ENCODE measurements at regions of chr5 and their contacts with region 1.

Region 1: DNA sequence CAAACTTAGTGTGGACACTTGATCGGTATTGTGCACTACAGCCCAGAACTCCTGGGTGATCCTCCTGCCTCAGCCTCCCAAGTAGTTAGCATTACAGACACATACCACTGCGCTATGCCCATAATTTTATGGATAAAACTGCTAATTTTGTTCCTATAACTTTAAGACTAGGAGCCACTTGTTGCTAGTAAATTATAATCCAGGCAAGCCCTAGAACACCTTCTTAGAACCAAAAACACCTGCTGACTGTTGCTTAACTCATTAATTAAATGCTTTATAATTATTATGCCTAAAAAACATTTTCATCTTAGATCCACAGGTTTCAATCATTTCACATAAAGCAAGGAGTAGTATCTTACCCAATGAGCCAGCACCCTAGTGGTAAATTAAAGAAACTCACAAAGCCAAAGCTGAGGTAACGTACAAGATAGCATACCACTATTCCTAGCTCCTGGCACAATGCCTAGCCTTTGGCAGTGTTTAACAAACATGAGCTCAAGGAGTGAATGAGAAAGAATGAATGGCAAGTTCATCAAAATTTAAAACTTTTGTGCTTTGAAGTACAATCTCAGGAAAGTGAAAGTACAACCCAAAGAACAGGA is 5.4 kb downstream of the MRPS27 start:
- DNase-seq: peak; percentile 82
- ATAC-seq: peak; percentile 65; the same call in 1 of the 2 replicates
- H3K4me3 ChIP-seq: peak overlapping the region; percentile 2; the same call in 1 of the 2 replicates
- H3K27ac ChIP-seq: no peak overlapping the region
- H3K4me1 ChIP-seq: no peaks in the 10 kb centered on the region
- H3K27me3 ChIP-seq: no peaks in the 10 kb centered on the region
- CTCF ChIP-seq: peak; percentile 29; the same call in 1 of the 2 replicates
- POLR2A ChIP-seq: no peak
- RAD21 ChIP-seq: no peak

Region 2: DNA sequence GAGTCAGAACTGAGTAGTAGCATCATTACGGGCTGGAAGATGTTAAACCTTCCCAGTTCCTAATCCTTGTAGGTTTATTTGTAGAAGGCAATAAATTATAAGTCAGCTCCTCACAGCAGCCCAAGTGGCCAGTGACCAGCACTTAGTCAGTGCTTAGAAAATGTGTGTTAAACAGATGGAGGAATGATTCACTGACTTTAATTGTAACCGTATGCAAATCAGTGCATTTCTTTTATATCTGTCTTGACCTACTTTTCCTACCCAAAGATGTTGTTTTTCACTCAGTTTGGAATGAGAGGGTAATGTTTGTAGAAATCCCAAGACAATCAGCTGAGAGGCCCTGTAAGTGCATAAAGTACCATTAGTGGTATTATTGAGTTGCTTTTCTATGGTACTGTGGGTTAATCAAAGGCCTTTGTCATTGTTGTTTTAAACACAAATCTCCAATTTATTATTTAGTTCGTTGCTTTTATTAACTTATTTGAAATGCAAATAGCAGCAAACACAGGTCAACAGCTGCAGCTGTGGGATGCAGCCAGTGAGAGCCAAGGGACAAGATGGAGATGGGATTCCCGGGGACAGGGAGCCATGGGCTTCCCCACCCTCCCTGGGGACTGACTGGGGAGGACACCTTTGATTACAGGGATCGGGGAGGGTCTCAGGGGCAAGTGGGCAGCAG is 157.6 kb before region 1 on chr5:
- CTCF ChIA-PET with region 1: no interaction called
- POLR2A ChIA-PET with region 1: no interaction called
- dilution Hi-C with region 1: no loop called
- in situ Hi-C with region 1: no loop called
- intact Hi-C with region 1: no loop called
- DNase-seq: peak; percentile 98
- ATAC-seq: peak; percentile 77
- H3K4me3 ChIP-seq: no peak overlapping the region
- H3K27ac ChIP-seq: peak overlapping the region; percentile 79; the same call in 1 of the 2 replicates
- H3K4me1 ChIP-seq: peaks cover 46% of the 10 kb centered on the region
- H3K27me3 ChIP-seq: no peaks in the 10 kb centered on the region
- CTCF ChIP-seq: no peak
- POLR2A ChIP-seq: no peak
- RAD21 ChIP-seq: 0 out of 2 replicates have a peak, but pooled peaks have one; percentile 3

Region 3: GRCh38 chr5:72268753-72269410 is 45.8 kb before region 1 on chr5:
- CTCF ChIA-PET with region 1: no interaction called
- POLR2A ChIA-PET with region 1: no interaction called
- dilution Hi-C with region 1: no loop called
- in situ Hi-C with region 1: no loop called
- intact Hi-C with region 1: no loop called
- DNase-seq: peak; percentile 43
- ATAC-seq: peak; percentile 42
- H3K4me3 ChIP-seq: no peak overlapping the region
- H3K27ac ChIP-seq: no peak overlapping the region
- H3K4me1 ChIP-seq: 0 out of 2 replicates have a peak, but pooled peaks cover 2% of the 10 kb centered on the region
- H3K27me3 ChIP-seq: no peaks in the 10 kb centered on the region
- CTCF ChIP-seq: peak; percentile 62
- POLR2A ChIP-seq: no peak
- RAD21 ChIP-seq: peak; percentile 57

Region 4: GRCh38 chr5:72328172-72328571 is 13.5 kb after region 1 on chr5:
- CTCF ChIA-PET with region 1: interaction called, 10 read pairs
- POLR2A ChIA-PET with region 1: no interaction called
- dilution Hi-C with region 1: no loop called
- in situ Hi-C with region 1: no loop called
- intact Hi-C with region 1: no loop called
- DNase-seq: peak; percentile 21
- ATAC-seq: peak; percentile 36; the same call in 1 of the 2 replicates
- H3K4me3 ChIP-seq: no peak overlapping the region
- H3K27ac ChIP-seq: peak overlapping the region; percentile 21; the same call in 1 of the 2 replicates
- H3K4me1 ChIP-seq: peaks cover 20% of the 10 kb centered on the region
- H3K27me3 ChIP-seq: no peaks in the 10 kb centered on the region
- CTCF ChIP-seq: no peak
- POLR2A ChIP-seq: no peak
- RAD21 ChIP-seq: no peak

Region 5: DNA sequence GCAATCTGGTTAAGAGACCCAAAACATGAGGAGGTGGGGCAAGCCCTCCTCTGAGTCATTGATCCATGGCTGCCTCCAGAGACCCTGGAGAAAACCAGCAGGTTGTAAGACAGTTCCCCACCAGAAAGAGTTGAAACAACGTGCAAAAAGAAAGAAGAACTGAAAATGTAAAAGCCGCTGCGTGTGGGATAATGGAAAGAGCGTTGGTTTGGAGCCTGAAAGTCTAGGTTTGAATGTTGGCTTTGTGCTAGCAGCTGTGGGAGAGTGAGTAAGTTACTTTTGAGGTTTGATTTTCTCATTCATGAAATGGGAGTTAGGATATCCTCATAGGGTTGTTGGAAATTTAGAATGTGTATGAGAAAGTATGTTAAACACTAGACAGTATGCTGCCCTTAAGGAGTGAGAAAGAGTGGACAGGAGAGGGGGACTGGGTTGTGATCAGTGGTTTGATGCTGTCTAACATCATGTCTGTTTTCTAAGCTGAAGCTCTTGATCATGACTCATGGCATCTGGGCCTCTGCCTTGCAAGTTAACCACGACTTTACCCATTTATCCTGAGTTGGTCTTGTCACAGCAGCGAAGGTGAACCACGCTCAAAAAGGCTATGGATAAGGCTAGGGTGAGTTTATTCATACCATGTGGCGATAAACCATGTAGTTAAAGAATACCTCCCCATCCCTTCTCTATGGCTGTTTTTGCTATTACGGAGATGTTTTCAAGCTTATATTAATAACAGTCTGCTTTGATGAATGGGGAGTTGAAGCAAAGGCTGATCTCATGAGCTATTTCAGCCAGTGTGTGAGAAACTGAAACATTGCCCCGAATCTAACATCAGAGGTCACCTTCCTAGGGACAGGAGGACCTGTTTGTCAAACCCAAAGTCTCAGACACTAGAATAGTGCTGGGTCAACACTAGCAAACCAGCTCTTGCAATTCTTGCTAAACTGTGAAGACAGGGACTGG is 151.2 kb after region 1 on chr5:
- CTCF ChIA-PET with region 1: no interaction called
- POLR2A ChIA-PET with region 1: no interaction called
- dilution Hi-C with region 1: no loop called
- in situ Hi-C with region 1: no loop called
- intact Hi-C with region 1: no loop called
- DNase-seq: peak; percentile 75
- ATAC-seq: peak; percentile 35; the same call in 1 of the 2 replicates
- H3K4me3 ChIP-seq: no peak overlapping the region
- H3K27ac ChIP-seq: no peak overlapping the region
- H3K4me1 ChIP-seq: peaks cover 6% of the 10 kb centered on the region; the same call in 1 of the 2 replicates
- H3K27me3 ChIP-seq: no peaks in the 10 kb centered on the region
- CTCF ChIP-seq: no peak
- POLR2A ChIP-seq: no peak
- RAD21 ChIP-seq: no peak